ENCODE measurements at regions of chr17 and their contacts with region 1.

Region 1: DNA sequence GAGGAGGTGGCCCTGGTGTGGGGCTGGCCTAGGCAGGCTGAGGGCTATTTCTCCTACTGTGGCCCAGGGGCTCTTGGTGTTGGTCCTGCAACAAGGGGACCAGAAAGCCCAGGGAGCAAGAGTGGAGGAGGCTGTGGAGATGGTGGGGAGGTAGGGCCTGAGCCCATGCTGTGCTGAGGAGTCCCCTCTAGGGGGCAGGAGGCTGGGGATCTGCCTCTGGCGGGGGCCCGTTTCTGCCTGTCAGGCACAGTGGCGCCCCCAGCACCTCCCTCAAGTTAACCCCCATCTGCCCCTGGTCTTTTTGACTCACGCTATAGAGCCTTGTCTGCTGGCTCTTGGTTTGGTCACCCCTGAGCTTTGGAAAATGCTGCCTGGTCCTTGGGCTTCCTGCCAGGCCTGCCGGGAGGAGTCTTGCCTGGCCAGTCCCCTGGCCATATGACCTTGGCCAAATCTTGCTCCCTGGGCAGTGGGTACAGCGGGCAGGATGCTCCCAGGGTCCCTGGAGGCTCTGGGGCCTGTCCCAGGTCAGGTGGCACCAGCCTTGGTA is 5.9 kb downstream of the BAIAP2 start:
- DNase-seq: peak; percentile 37
- ATAC-seq: peak; percentile 13
- H3K4me3 ChIP-seq: no peak overlapping the region
- H3K27ac ChIP-seq: no peak overlapping the region
- H3K4me1 ChIP-seq: peaks cover 98% of the 10 kb centered on the region
- H3K27me3 ChIP-seq: no peaks in the 10 kb centered on the region; a peak in 1 of 5 replicates
- CTCF ChIP-seq: peak; percentile 72
- EP300 ChIP-seq: no peak
- POLR2A ChIP-seq: no peak
- RAD21 ChIP-seq: peak; percentile 72

Region 2: DNA sequence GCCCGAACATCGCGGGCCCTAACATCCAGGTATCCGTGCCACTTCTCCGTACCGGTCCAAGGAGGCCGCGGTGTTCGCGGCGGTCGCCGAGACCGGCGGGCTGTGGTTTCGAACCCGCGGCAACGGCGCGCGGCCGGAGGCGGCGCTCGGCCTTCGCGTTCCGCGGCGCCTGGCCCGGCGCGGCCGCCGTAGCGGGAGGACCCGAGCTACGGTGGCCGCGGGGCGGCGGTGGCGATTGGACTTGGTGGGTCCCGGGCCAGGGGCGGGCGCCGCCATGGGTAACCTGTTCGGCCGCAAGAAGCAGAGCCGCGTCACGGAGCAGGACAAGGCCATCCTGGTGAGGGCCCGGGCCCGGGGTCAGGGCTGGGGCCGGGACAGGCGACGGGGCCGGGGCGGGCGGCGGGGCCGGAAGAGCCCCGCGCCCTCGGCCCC is 49.2 kb before region 1 on chr17 and contains the start of gene CHMP6:
- CTCF ChIA-PET with region 1: no interaction called
- POLR2A ChIA-PET with region 1: interaction called, 6 read pairs
- in situ Hi-C with region 1: no loop called
- intact Hi-C with region 1: loop called (anchors 5 kb)
- DNase-seq: peak; percentile 60
- ATAC-seq: peak; percentile 13
- H3K4me3 ChIP-seq: peak within 1 kb of the TSS; percentile 87 to 95 (median 95)
- H3K27ac ChIP-seq: peak within 1 kb of the TSS; percentile 49
- H3K4me1 ChIP-seq: peaks cover 63% of the 10 kb centered on the region
- H3K27me3 ChIP-seq: peaks cover 3 to 30% of the 10 kb centered on the region in 2 experiments; a peak in 4 of 5 replicates
- CTCF ChIP-seq: peak; percentile 38; the same call in 1 of the 2 replicates
- EP300 ChIP-seq: peak in 1 of 2 experiments; percentile 46; a peak in 1 of 4 replicates
- POLR2A ChIP-seq: peak; percentile 46 to 55; a peak in 2 of 4 replicates
- RAD21 ChIP-seq: peak; percentile 54
- total RNA-seq, gene CHMP6: 24.2 and 24.6 TPM in 2 replicates

Region 3: DNA sequence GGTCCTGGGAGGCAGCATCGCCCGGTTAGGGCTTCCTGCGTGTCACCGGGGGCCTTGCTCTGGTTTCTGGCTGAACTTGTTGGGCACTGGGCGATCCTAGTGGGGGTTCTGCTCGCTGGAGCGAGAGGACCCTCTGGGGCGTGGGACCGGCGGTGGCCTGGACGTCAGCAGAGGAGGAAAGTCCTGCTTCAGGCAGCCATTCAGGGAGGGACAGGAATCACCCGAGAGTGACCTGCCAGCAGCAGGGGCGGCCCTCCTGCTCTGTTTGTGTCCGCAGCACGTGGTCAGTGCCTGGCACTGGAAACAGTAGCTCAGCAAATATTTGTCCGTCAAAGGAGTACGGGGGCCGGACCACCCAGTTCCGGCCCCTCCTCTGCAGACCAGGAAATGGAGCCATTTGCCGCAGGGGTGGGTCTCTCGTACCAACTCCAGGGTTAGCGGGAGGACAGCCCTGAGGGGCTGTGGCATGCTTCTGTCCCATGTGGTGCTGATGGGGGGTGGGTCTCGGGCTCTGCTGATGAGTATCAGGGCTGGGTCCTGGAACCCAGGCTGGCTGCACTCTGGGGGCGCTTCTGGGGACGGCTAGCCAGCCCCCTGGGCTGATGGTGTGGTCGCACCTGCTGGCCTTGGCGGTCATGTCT is 42.4 kb after region 1 on chr17:
- CTCF ChIA-PET with region 1: no interaction called
- POLR2A ChIA-PET with region 1: interaction called, 18 read pairs
- in situ Hi-C with region 1: loop called (anchors 5 kb)
- intact Hi-C with region 1: loop called (anchors 5 kb)
- DNase-seq: peak; percentile 94
- ATAC-seq: peak; percentile 93
- H3K4me3 ChIP-seq: peak overlapping the region in 1 of 3 experiments; percentile 36; a peak in 1 of 6 replicates
- H3K27ac ChIP-seq: peak overlapping the region; percentile 86
- H3K4me1 ChIP-seq: peaks cover 34% of the 10 kb centered on the region
- H3K27me3 ChIP-seq: no peaks in the 10 kb centered on the region
- CTCF ChIP-seq: 0 out of 2 replicates have a peak, but pooled peaks have one; percentile 27
- EP300 ChIP-seq: peak in 1 of 2 experiments; percentile 92; a peak in 2 of 4 replicates
- POLR2A ChIP-seq: peak; percentile 23 to 64; a peak in 2 of 4 replicates
- RAD21 ChIP-seq: peak; percentile 43; the same call in 1 of the 2 replicates